ENCODE measurements at regions of chr2 and their contacts with region 1.

Region 1: DNA sequence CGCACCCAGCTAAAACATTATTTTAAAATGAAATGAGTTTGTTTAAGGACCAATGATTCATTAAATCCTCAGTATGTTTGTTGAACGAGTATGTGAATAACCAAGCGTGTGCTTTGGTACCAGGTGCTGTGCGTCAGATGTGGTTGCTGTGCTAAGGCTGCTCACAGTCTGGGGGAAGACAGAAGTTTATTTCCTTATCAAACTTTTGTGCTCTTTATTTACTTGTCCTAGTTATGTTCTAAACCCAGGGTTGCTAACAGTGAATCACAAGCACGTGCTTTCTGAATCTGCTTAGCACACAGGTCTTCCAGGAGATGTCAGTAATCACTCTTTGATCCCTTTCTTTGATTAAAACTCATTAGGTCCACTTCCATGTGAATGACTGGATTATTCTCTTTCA is 37.0 kb downstream of the RAPGEF4 start:
- DNase-seq: no peak
- ATAC-seq: no peak
- H3K4me3 ChIP-seq: no peak overlapping the region
- H3K27ac ChIP-seq: no peak overlapping the region
- H3K4me1 ChIP-seq: no peaks in the 10 kb centered on the region
- H3K27me3 ChIP-seq: peaks cover 31% of the 10 kb centered on the region
- CTCF ChIP-seq: no peak
- POLR2A ChIP-seq: no peak
- RAD21 ChIP-seq: no peak

Region 2: GRCh38 chr2:171330155-171330956 is 1442.3 kb before region 1 on chr2:
- CTCF ChIA-PET with region 1: no interaction called
- POLR2A ChIA-PET with region 1: no interaction called
- RAD21 ChIA-PET with region 1: no interaction called
- intact Hi-C with region 1: loop called (anchors 10 kb)
- DNase-seq: no peak
- ATAC-seq: no peak
- H3K4me3 ChIP-seq: no peak overlapping the region
- H3K27ac ChIP-seq: no peak overlapping the region
- H3K4me1 ChIP-seq: no peaks in the 10 kb centered on the region
- H3K27me3 ChIP-seq: no peaks in the 10 kb centered on the region
- CTCF ChIP-seq: no peak
- POLR2A ChIP-seq: no peak
- RAD21 ChIP-seq: no peak

Region 3: GRCh38 chr2:173370198-173370597 is 597.6 kb after region 1 on chr2:
- CTCF ChIA-PET with region 1: no interaction called
- POLR2A ChIA-PET with region 1: no interaction called
- RAD21 ChIA-PET with region 1: no interaction called
- intact Hi-C with region 1: no loop called
- DNase-seq: no peak
- ATAC-seq: no peak
- H3K4me3 ChIP-seq: no peak overlapping the region
- H3K27ac ChIP-seq: no peak overlapping the region
- H3K4me1 ChIP-seq: no peaks in the 10 kb centered on the region
- H3K27me3 ChIP-seq: no peaks in the 10 kb centered on the region
- CTCF ChIP-seq: no peak
- POLR2A ChIP-seq: no peak
- RAD21 ChIP-seq: no peak